Dendritic cell treated with granulocyte-macrophage colony-stimulating factor and Interleukin-4, amounts not matched to agents 40 ng/mL and 50 ng/mL, for 4 days (primary cell): ENCODE measurements at regions of chr6 and their contacts with region 1.

Region 1: GRCh38 chr6:35342258-35343091 is at the start of gene PPARD:
- H3K4me3 Mint-ChIP-seq: peak within 1 kb of the TSS; percentile 89
- H3K27ac Mint-ChIP-seq: peak within 1 kb of the TSS; percentile 91
- H3K4me1 Mint-ChIP-seq: peaks cover 42% of the 10 kb centered on the region
- H3K27me3 Mint-ChIP-seq: peaks cover 7% of the 10 kb centered on the region

Region 2: DNA sequence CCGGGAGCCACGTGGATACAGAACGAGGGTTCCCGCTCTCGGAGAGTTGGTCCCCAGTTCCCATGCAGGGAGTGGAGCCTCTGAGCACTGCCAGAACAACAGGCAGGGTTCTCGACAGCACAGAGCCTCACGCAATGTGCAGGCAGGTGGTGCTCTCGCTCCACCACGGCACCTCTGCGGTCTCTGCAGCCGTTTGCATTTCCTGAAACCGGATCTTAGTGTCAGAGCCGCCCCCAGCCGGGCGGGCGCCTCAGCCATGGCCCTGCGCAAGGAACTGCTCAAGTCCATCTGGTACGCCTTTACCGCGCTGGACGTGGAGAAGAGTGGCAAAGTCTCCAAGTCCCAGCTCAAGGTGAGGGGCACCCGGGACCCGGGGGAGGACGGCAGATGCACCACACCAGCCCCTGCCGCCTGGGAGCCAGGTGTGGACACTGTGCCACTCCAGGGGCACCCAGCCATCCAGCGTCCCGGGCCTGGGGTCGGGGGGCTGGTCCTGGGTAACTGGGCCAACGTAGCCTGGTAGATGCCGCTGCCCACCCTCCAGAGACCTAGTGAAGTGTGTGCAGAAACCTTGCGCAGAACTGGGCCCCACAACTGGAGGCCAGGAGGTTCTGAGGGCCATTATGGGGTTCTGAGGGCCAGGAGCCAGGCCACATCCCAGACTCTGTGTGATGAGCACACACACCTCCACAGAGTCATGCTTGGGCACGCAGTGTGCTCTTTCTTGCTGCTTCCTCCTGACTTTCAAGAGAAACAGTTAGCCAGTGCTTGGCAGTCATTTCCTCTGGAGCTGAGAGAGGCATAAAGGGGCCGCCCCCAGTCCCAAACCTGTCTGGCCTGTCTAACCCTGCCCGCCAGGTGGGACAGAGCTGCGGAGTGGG is 44.6 kb before region 1 on chr6 and contains the start of gene DEF6:
- intact Hi-C with region 1: loop called (anchors 5 kb)
- H3K4me3 Mint-ChIP-seq: peak within 1 kb of the TSS; percentile 79
- H3K27ac Mint-ChIP-seq: peak within 1 kb of the TSS; percentile 78
- H3K4me1 Mint-ChIP-seq: peaks cover 56% of the 10 kb centered on the region
- H3K27me3 Mint-ChIP-seq: no peaks in the 10 kb centered on the region

Region 3: GRCh38 chr6:35370124-35370741 is 27.8 kb after region 1 on chr6:
- intact Hi-C with region 1: loop called (anchors 2 kb)
- H3K4me3 Mint-ChIP-seq: peak overlapping the region; percentile 55
- H3K27ac Mint-ChIP-seq: peak overlapping the region; percentile 83
- H3K4me1 Mint-ChIP-seq: peaks cover 89% of the 10 kb centered on the region
- H3K27me3 Mint-ChIP-seq: no peaks in the 10 kb centered on the region

Region 4: GRCh38 chr6:35391240-35391968 is 48.9 kb after region 1 on chr6:
- intact Hi-C with region 1: no loop called
- H3K4me3 Mint-ChIP-seq: no peak overlapping the region
- H3K27ac Mint-ChIP-seq: no peak overlapping the region
- H3K4me1 Mint-ChIP-seq: peaks cover 66% of the 10 kb centered on the region
- H3K27me3 Mint-ChIP-seq: peaks cover 1% of the 10 kb centered on the region

Region 5: DNA sequence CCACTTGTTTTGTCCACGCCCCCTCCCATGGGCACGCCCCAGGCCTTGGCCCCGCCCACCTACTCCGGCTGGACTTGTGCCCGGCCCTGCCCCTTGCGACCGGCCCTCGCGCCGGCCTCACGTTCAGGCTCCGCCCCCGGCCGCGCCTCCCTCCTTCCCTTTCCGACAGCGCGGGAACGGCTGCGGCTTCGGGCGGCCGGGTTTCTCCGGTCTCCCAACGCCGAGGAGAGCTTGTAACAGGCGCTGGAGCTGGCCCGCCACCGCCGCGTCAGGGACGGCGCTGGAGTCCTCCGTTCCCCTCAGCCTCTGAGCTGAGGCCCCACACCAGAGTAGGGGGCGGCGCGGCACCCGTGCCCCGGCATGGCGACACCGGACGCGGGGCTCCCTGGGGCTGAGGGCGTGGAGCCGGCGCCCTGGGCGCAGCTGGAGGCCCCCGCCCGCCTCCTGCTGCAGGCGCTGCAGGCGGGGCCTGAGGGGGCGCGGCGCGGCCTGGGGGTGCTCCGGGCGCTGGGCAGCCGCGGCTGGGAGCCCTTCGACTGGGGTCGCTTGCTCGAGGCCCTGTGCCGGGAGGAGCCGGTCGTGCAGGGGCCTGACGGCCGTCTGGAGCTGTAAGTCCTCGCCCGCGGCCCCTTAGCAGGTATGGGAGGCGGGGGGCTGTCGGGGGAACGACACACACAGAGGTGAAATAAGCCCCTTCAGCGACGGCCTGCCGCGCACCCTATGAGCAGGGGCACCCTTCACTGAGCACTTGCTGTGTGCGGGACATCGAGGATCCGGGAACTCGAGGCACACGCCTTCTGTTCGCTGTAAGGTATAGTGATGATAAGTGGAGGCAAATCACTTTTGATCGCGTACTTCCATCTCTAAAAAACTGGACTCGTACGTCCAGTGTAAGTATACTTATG is 110.0 kb after region 1 on chr6 and contains the start of gene FANCE:
- intact Hi-C with region 1: loop called (anchors 1 kb)
- H3K4me3 Mint-ChIP-seq: peak within 1 kb of the TSS; percentile 85
- H3K27ac Mint-ChIP-seq: peak within 1 kb of the TSS; percentile 26
- H3K4me1 Mint-ChIP-seq: peaks cover 44% of the 10 kb centered on the region
- H3K27me3 Mint-ChIP-seq: peaks cover 20% of the 10 kb centered on the region

Region 6: DNA sequence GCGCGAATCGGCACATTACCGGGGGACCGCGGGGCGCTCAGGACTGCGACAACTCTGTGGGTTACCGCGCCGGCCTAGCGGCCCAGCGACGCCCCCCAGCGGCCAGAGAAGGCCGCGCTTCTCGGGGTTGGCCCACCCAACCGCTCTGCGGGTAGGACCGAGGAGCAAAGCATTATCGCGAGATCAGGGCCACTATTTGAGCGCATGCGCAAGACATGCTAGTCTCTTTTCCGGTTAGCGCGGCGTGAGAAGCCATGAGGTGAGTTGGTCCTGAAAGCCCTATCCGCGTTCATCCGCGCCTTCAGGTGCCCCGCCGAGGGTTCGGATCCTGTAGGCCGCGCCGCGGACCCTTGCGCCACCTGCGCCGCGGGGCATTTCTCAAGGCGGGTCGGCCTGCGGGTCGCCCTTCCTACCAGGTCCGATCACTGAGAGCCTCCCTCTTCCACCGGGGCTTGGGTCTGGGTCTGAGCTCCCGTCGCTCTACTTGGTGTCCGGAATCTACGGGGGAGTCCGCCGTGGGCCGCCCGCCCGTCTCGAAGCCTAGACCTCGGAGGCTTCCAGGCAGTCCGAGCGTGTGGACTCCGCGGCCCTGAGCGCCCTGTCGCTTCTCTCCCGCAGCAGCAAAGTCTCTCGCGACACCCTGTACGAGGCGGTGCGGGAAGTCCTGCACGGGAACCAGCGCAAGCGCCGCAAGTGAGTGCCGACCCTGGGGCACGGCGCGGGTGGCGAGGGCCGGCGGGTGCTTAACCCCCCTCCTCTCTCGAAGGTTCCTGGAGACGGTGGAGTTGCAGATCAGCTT is 125.9 kb after region 1 on chr6 and contains the start of gene RPL10A:
- intact Hi-C with region 1: loop called (anchors 1 kb)
- H3K4me3 Mint-ChIP-seq: peak within 1 kb of the TSS; percentile 99
- H3K27ac Mint-ChIP-seq: peak within 1 kb of the TSS; percentile 99
- H3K4me1 Mint-ChIP-seq: peaks cover 34% of the 10 kb centered on the region
- H3K27me3 Mint-ChIP-seq: no peaks in the 10 kb centered on the region